B cell (primary cell): ENCODE measurements at regions of chr19 and their contacts with region 1.

Region 1: GRCh38 chr19:35775298-35776110 is at the start of gene ARHGAP33:
- DNase-seq: peak; percentile 99
- ATAC-seq: peak; percentile 99
- H3K4me3 ChIP-seq: peak within 1 kb of the TSS; percentile 26 to 68 (median 58)
- H3K4me3 Mint-ChIP-seq: peak within 1 kb of the TSS; percentile 86
- H3K27ac ChIP-seq: peak within 1 kb of the TSS in 1 of 2 donors; percentile 19
- H3K27ac Mint-ChIP-seq: peak within 1 kb of the TSS; percentile 43
- H3K4me1 ChIP-seq: peaks cover 10 to 16% of the 10 kb centered on the region in 2 donors
- H3K4me1 Mint-ChIP-seq: peaks cover 10% of the 10 kb centered on the region
- H3K27me3 ChIP-seq: no peaks in the 10 kb centered on the region
- H3K27me3 Mint-ChIP-seq: no peaks in the 10 kb centered on the region
- CTCF ChIP-seq: no peak
- total RNA-seq, gene ARHGAP33: 18.2 and 21.6 TPM in 2 replicates

Region 2: GRCh38 chr19:35445826-35446593 is 329.5 kb before region 1 on chr19:
- CTCF ChIA-PET with region 1: no interaction called
- POLR2A ChIA-PET with region 1: no interaction called
- intact Hi-C with region 1: no loop called
- DNase-seq: no peak
- ATAC-seq: no peak
- H3K4me3 ChIP-seq: no peak overlapping the region
- H3K4me3 Mint-ChIP-seq: no peak overlapping the region
- H3K27ac ChIP-seq: no peak overlapping the region
- H3K27ac Mint-ChIP-seq: peak overlapping the region; percentile 8
- H3K4me1 ChIP-seq: peaks cover 33 to 38% of the 10 kb centered on the region in 2 donors
- H3K4me1 Mint-ChIP-seq: peaks cover 54% of the 10 kb centered on the region
- H3K27me3 ChIP-seq: no peaks in the 10 kb centered on the region
- H3K27me3 Mint-ChIP-seq: peaks cover 11% of the 10 kb centered on the region
- CTCF ChIP-seq: no peak

Region 3: GRCh38 chr19:35757749-35758608 is 17.5 kb before region 1 on chr19 and contains the start of gene PROSER3:
- CTCF ChIA-PET with region 1: no interaction called
- POLR2A ChIA-PET with region 1: no interaction called
- intact Hi-C with region 1: loop called (anchors 1 kb)
- DNase-seq: peak; percentile 99
- ATAC-seq: peak; percentile 95
- H3K4me3 ChIP-seq: peak within 1 kb of the TSS; percentile 85 to 99 (median 94)
- H3K4me3 Mint-ChIP-seq: peak within 1 kb of the TSS; percentile 99
- H3K27ac ChIP-seq: peak within 1 kb of the TSS; percentile 91 to 96
- H3K27ac Mint-ChIP-seq: peak within 1 kb of the TSS; percentile 99
- H3K4me1 ChIP-seq: peaks cover 24 to 35% of the 10 kb centered on the region in 2 donors
- H3K4me1 Mint-ChIP-seq: peaks cover 34% of the 10 kb centered on the region
- H3K27me3 ChIP-seq: peaks cover 0 to 26% (median 10%) of the 10 kb centered on the region in 4 experiments
- H3K27me3 Mint-ChIP-seq: peaks cover 17% of the 10 kb centered on the region
- CTCF ChIP-seq: no peak
- total RNA-seq, gene PROSER3: 61.0 and 65.6 TPM in 2 replicates